Esophagus squamous epithelium (tissue), 5 donors: ENCODE measurements at regions of chr2 and their contacts with region 1.

Region 1: GRCh38 chr2:218727502-218728165 is 17.0 kb downstream of the TTLL4 start:
- DNase-seq: no peak
- H3K4me3 ChIP-seq: no peak overlapping the region
- H3K27ac ChIP-seq: no peak overlapping the region
- H3K4me1 ChIP-seq: peaks cover 0 to 19% (median 15%) of the 10 kb centered on the region in 3 donors
- H3K27me3 ChIP-seq: no peaks in the 10 kb centered on the region
- CTCF ChIP-seq: peak; percentile 13 to 68 (median 35)
- POLR2A ChIP-seq: no peak

Region 2: DNA sequence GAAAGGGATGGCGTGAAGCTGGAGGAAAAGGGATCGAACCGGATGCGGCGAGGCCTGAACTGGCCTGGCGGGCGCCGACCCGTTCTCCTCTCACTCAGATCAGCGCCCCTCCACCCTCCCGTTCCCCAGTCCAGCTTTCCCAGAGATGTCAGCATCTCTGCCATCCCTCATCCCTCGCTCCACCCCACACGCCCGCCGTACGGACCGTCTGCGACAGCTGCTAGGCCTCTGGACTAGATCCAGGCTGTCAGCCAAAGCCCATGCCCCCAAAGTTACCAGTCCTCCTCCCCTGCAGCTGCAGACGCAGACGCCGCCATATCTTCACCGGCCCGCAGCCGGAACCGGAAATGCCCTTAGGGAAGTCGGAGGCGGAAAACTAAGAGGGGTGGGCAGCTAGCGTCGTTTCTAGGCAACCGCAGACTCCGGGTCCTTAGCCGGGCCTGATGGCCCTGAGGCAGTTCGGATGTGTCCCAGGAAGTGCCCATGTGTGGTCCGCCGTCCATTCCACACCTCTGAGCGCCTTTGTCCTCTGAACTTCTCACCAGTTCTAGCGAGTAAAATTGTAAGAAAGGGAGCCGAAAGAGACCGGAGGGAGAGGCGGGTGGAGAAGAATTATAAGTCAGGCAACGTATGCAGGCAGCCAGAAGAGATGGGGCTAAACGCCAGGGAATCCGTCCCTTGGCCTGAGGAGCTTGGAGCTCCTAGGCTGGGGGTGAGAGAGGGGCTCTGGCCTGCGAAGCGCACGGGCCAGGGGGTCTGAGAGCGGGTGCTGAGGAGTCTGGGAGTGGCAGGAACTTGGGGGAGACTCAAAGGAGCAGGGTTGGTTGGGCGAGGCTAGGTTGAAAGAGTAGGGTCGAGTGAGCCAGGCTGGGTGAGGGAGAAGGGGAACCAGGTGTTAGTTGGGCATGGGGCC is 55.7 kb before region 1 on chr2 and contains the starts of genes RNF25 and STK36:
- intact Hi-C with region 1: no loop called
- DNase-seq: peak; percentile 25
- H3K4me3 ChIP-seq: peak within 1 kb of the TSS; percentile 56 to 92 (median 84)
- H3K27ac ChIP-seq: peak within 1 kb of the TSS; percentile 73 to 86 (median 84)
- H3K4me1 ChIP-seq: peaks cover 5 to 33% (median 15%) of the 10 kb centered on the region in 3 donors
- H3K27me3 ChIP-seq: no peaks in the 10 kb centered on the region
- CTCF ChIP-seq: peak in 1 of 6 experiments; percentile 4
- POLR2A ChIP-seq: peak in 2 of 4 donors; percentile 57 to 61
- total RNA-seq, gene RNF25: 9.6 to 17.4 (median 15.7) TPM
- total RNA-seq, gene STK36: 5.8 to 27.8 (median 10.4) TPM

Region 3: GRCh38 chr2:218820746-218821369 is 93.2 kb after region 1 on chr2:
- intact Hi-C with region 1: no loop called
- DNase-seq: no peak
- H3K4me3 ChIP-seq: no peak overlapping the region
- H3K27ac ChIP-seq: no peak overlapping the region
- H3K4me1 ChIP-seq: no peaks in the 10 kb centered on the region
- H3K27me3 ChIP-seq: no peaks in the 10 kb centered on the region
- CTCF ChIP-seq: no peak
- POLR2A ChIP-seq: no peak

Region 4: DNA sequence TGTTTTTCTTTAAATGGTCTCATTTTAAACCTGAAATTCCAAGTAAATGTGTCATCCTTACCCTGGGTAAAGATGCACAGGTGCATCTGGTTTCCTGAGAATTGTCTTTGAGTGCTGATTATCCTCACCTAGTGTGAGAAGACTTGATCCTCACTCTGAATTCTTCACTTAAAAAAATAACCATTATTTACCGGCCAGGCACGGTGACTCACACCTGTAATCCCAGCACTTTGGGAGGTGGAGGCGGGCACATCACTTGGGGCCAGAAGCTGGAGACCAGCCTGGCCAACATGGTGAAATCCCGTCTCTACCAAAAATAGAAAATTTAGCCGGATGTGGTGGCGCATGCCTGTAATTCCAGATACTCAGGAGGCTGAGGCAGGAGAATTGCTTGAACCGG is 122.1 kb after region 1 on chr2:
- intact Hi-C with region 1: loop called (anchors 5 kb)
- DNase-seq: no peak
- H3K4me3 ChIP-seq: no peak overlapping the region
- H3K27ac ChIP-seq: no peak overlapping the region
- H3K4me1 ChIP-seq: peaks cover 0 to 22% (median 0%) of the 10 kb centered on the region in 3 donors
- H3K27me3 ChIP-seq: peaks cover 0 to 69% (median 0%) of the 10 kb centered on the region in 4 donors
- CTCF ChIP-seq: no peak
- POLR2A ChIP-seq: no peak